ENCODE measurements at regions of chr12 and their contacts with region 1.

Region 1: DNA sequence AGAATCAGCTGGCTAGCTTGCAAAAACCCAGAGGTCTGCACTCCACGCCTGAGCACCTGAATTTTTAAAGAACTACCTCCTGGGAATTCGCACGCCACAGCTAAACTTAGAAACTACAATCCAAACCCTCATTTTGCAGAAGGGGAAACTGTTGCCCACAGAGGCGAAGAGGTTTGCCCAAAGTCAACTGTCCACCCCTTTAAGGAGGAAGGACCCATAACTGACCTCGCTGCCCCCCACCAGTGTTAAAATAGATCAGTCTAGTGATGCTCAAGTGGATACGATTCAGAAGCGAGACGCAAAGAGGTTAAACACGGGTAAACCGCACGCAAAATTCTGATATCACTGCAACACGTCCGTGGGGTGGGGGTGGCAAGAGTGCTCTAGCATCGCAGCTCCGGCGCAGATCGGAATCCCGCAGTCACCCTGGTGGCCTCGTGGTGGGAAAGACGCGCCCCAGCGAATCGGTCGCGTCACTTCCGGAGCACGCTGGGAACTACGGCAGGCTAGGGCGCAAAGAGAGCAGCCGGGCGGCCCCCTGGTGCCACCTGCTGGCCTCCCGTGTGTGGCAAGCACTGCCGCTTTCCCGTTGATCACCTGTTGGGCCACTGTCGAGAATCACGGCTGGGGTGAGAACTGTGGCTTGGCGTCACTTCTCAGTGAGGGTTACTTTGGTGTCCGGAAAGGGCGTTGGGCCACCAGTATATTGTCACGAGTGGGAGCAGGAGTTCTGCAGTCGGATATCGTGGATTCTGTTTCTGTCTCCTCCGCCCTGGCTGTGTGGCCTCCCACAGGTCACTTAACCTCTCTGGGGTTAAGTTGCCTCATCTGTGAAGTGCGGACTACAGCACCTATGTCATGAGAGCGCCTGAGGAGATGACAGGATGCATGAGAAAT is at the start of gene ALKBH2:
- DNase-seq: peak; percentile 97
- H3K4me3 Mint-ChIP-seq: peak within 1 kb of the TSS; percentile 71
- H3K27ac Mint-ChIP-seq: peak within 1 kb of the TSS; percentile 81
- H3K4me1 Mint-ChIP-seq: peaks cover 34% of the 10 kb centered on the region
- H3K27me3 Mint-ChIP-seq: no peaks in the 10 kb centered on the region
- total RNA-seq, gene ALKBH2: 23.9 to 28.6 TPM

Region 2: GRCh38 chr12:108562348-108563135 is 530.7 kb before region 1 on chr12 and contains the start of gene ISCU:
- CTCF ChIA-PET with region 1: interaction called, 3 read pairs
- POLR2A ChIA-PET with region 1: no interaction called
- intact Hi-C with region 1: loop called (anchors 2 kb)
- DNase-seq: peak; percentile 99
- H3K4me3 Mint-ChIP-seq: peak within 1 kb of the TSS; percentile 100
- H3K27ac Mint-ChIP-seq: peak within 1 kb of the TSS; percentile 99
- H3K4me1 Mint-ChIP-seq: peaks cover 57% of the 10 kb centered on the region
- H3K27me3 Mint-ChIP-seq: no peaks in the 10 kb centered on the region
- total RNA-seq, gene ISCU: 88.6 to 94.3 TPM

Region 3: GRCh38 chr12:108664338-108665258 is 428.7 kb before region 1 on chr12:
- CTCF ChIA-PET with region 1: interaction called, 10 read pairs
- POLR2A ChIA-PET with region 1: no interaction called
- intact Hi-C with region 1: loop called (anchors 10 kb)
- DNase-seq: peak; percentile 92
- H3K4me3 Mint-ChIP-seq: peak overlapping the region; percentile 33
- H3K27ac Mint-ChIP-seq: peak overlapping the region; percentile 83
- H3K4me1 Mint-ChIP-seq: peaks cover 23% of the 10 kb centered on the region
- H3K27me3 Mint-ChIP-seq: no peaks in the 10 kb centered on the region

Region 4: DNA sequence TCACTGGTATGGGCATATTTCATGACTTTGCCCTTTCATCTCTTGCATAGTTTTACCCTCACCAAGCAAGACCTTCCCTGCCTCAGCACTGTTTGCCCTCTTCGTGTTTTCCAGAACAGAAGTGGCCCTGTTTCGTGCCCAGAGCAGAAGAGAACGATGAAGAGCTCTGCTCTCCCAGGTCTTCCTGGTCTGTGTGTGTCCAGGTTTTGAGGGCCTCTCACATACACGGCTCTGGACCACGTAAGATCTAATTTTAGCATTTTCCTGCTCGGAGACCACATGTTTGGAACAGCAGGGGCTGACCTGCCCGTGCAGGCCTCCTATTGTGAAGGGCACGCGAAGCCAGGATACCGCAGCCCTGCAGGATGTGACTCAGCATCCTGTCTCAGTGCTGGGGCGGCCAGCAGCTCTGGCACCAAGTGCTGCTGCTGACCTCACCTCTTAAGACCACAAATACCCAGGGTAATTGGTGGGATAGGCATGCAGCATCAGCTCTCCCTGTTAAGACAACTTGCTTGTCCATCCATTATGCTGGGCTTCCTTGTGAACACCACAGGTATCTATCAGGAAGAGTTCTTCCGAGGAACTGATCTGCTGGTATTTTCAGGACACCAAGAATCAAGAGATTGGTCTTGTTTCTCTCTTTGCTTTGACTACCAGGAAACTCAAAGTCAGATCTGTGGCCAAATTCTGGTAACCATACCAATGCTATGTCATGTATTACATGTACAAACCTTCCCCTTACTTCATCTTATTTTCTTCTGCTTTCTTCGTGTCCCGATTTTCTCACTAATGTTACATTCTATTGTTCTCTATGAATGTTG is 254.9 kb before region 1 on chr12:
- CTCF ChIA-PET with region 1: no interaction called
- POLR2A ChIA-PET with region 1: no interaction called
- intact Hi-C with region 1: loop called (anchors 5 kb)
- DNase-seq: peak; percentile 90
- H3K4me3 Mint-ChIP-seq: peak overlapping the region; percentile 63
- H3K27ac Mint-ChIP-seq: peak overlapping the region; percentile 92
- H3K4me1 Mint-ChIP-seq: peaks cover 38% of the 10 kb centered on the region
- H3K27me3 Mint-ChIP-seq: no peaks in the 10 kb centered on the region

Region 5: DNA sequence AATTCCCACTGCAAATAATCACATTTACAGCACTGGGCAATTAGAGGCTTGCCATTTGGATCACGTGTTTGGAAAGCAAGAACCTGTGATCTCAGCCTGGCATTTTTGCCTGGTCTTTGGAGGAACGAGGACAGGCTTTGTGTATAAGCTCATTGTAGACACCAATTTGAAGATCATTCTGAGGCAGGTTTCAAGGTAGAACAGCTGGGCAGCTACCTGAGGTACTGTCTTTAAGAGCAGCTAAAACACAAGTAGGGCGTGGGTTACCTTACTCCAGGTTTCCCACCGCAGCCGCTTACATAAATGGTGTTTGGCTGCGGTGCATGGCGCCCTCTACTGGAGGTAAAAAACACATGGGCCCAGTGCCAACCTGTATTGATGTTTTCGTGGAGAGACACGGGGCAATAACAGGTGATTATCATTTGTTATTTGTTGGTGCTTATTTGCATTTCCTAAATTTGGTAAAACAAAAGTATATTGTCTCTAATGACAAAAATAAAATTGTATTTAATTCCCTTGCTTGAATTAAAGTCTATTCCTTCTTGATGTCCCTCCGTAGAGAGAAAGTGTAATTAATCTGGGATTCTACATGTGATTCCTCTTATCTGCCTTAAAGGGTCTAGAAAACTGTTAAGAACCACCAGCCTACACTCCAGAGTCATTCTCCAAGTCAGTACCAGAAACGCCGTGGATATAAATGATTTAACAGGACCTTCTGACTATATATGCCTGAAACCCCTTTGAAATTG is 142.1 kb before region 1 on chr12:
- CTCF ChIA-PET with region 1: interaction called, 9 read pairs
- POLR2A ChIA-PET with region 1: no interaction called
- intact Hi-C with region 1: loop called (anchors 1 kb)
- DNase-seq: peak; percentile 80
- H3K4me3 Mint-ChIP-seq: no peak overlapping the region
- H3K27ac Mint-ChIP-seq: no peak overlapping the region
- H3K4me1 Mint-ChIP-seq: peaks cover 2% of the 10 kb centered on the region
- H3K27me3 Mint-ChIP-seq: peaks cover 6% of the 10 kb centered on the region

Region 6: DNA sequence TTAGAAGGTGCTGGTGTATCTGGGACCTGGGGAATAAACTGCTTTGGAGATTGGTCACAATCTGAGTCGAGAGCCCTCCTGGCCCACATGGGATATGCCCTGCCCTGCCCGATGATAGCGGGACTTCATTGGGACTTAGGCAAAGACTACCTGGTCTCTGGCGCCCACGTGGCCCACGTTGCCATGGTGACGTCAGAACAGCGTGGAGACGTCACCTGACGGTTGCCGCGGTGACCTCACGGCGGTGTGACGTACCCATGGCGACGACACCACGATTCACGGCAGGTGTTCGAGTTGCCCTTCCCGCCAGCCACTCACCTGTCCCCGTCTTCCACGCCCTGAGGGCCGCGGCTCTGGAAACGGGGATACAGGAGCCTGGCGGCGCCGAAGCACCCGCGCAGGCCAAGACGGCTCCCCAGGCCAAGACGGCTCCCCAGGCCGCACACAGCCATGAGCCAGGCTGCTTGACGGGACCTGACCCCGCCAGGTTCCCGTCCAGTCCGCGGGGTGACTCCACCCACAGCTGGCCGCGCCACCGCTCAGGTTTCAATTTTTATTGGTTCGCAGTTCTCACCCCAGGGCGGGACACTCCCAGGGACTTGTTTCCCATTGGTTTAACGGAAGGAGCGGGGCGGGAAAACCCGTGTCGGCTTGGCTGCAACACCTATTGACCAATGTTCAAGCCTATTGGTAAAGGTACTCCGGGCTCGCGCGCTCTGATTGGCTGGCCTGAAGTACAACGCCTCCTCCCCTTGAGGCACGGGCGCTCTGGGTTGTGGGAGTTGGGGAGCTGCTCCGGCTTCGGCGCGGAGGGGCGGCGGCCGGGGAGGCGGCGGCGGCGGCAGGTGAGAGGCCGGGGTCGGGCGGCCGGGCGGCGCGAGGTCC is 480.0 kb after region 1 on chr12 and contains the starts of genes MMAB and MVK:
- CTCF ChIA-PET with region 1: no interaction called
- POLR2A ChIA-PET with region 1: no interaction called
- intact Hi-C with region 1: loop called (anchors 5 kb)
- DNase-seq: peak; percentile 100
- H3K4me3 Mint-ChIP-seq: peak within 1 kb of the TSS; percentile 86
- H3K27ac Mint-ChIP-seq: peak within 1 kb of the TSS; percentile 85
- H3K4me1 Mint-ChIP-seq: peaks cover 27% of the 10 kb centered on the region
- H3K27me3 Mint-ChIP-seq: no peaks in the 10 kb centered on the region
- total RNA-seq, gene MMAB: 42.4 to 48.3 TPM
- total RNA-seq, gene MVK: 21.2 TPM